AG04449 (cell line): ENCODE measurements at regions of chr2 and their contacts with region 1.

Region 1: GRCh38 chr2:44244129-44244871 is 31.0 kb upstream of the SLC3A1 start:
- DNase-seq: no peak
- H3K4me3 ChIP-seq: peak overlapping the region; percentile 33
- CTCF ChIP-seq: peak; percentile 33

Region 2: DNA sequence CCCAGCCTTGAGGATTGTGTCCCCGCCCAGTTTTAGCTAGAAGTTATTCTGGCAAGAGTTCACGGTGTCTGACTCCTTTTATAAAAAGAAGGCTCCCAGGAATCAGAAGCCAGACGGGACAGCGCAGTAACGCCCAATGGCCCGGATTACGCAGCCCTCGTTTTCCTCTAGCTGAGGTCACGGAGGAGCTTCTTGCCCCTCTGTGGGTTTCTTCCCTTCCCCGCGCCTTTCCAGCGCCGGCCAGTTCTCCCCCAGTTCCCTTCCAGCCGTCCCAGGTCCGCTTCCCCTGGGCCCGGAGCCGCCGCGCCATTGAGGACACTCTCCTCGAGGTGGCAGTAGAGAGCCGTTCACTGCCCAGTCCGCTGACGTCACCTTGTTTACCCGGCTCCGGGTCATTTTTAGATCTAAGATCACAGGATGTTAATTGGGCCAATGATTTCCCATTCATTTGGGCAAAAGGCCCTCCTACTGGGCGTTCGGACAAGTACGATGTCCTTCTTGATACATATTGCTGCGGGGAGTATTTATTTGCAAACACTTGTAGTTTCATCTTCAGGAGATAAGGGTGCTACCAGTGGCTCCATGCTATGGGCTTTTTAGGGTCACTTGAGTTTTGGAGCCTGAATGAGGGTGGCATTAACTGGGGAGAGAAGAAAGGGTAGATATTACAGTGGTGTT is 157.1 kb before region 1 on chr2:
- CTCF ChIA-PET with region 1: interaction called, 20 read pairs
- POLR2A ChIA-PET with region 1: no interaction called
- DNase-seq: no peak
- H3K4me3 ChIP-seq: peak overlapping the region; percentile 58
- CTCF ChIP-seq: peak; percentile 96

Region 3: GRCh38 chr2:44191739-44192138 is 52.6 kb before region 1 on chr2:
- CTCF ChIA-PET with region 1: no interaction called
- POLR2A ChIA-PET with region 1: no interaction called
- DNase-seq: no peak
- H3K4me3 ChIP-seq: no peak overlapping the region
- CTCF ChIP-seq: no peak

Region 4: GRCh38 chr2:44233450-44234128 is 10.7 kb before region 1 on chr2:
- CTCF ChIA-PET with region 1: interaction called, 11 read pairs
- POLR2A ChIA-PET with region 1: no interaction called
- DNase-seq: peak; percentile 24
- H3K4me3 ChIP-seq: no peak overlapping the region
- CTCF ChIP-seq: no peak

Region 5: DNA sequence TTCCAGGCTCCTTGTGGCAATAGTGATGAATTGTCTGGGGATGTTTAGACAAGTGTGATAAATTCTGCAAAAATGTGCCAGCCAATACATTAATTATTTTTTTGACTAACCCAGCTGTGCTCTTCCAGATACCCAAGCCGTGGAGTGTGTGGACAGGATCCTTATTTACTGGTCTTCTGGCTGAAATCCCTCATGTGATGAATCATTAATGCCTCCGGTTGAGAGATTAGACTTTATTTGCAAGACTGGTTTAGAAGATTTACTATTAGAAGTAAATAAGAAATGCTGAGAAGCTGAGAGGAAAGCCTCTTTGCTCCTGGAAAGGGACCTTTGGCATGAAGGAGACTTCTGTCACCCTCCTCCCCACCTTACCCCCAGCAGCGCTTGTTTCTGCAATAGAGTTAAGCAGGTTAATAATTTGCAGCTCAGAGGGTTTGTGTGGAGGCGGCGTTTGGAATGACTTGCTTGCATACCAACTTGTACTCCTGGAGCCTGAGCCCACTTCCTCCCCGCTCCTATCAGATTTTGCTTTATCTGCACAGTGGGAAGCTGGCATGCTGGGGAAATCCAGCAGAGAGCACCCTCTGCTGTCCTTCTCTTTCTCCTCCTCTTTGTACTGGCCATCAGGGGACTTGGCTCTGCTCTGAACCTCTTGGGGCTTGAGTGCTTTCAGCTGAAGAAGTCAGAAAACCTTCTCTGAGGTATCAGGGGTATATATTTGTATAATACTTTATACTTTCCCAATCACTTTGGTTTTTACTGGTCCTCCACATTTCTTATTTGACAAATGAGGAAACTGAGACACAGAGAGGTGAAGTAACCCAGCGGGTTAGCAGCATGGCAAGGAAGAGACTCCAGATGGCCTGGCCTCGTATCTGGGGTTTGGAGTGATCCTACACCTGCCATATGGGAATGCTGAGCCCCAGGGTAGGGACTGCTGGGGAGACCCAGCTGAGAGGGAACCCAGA is 47.3 kb after region 1 on chr2:
- CTCF ChIA-PET with region 1: interaction called, 25 read pairs
- POLR2A ChIA-PET with region 1: no interaction called
- DNase-seq: no peak
- H3K4me3 ChIP-seq: no peak overlapping the region; the same call in 1 of the 2 replicates
- CTCF ChIP-seq: peak; percentile 66

Region 6: DNA sequence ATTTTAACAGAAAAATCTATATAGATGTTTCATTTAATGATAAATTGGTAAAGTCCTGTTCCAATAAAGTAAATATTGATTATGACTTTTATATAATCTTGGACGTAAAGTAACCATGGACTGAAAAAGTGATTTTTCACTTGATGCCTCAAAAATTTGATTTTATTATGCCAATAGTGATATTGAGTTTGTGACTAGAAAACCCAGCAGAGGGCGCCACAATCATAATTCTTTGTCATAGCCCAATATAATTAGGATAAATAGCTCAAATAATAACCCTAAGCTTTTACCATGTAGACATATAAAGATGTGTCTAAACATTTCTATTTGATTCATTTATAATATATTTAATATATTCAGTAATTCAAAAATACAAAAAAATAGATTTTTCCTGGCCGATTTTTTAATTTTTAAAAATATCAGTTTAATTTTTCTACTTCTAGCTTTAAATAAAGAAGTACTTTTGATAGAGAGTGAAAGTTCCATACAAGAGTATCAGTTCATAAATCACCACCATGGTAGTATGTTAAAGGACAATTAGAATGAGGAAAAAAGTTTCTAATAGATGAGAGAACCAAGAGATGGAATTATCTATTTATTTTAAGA is 148.1 kb after region 1 on chr2:
- CTCF ChIA-PET with region 1: interaction called, 12 read pairs
- POLR2A ChIA-PET with region 1: no interaction called
- DNase-seq: no peak
- H3K4me3 ChIP-seq: no peak overlapping the region
- CTCF ChIP-seq: peak; percentile 44

Region 7: DNA sequence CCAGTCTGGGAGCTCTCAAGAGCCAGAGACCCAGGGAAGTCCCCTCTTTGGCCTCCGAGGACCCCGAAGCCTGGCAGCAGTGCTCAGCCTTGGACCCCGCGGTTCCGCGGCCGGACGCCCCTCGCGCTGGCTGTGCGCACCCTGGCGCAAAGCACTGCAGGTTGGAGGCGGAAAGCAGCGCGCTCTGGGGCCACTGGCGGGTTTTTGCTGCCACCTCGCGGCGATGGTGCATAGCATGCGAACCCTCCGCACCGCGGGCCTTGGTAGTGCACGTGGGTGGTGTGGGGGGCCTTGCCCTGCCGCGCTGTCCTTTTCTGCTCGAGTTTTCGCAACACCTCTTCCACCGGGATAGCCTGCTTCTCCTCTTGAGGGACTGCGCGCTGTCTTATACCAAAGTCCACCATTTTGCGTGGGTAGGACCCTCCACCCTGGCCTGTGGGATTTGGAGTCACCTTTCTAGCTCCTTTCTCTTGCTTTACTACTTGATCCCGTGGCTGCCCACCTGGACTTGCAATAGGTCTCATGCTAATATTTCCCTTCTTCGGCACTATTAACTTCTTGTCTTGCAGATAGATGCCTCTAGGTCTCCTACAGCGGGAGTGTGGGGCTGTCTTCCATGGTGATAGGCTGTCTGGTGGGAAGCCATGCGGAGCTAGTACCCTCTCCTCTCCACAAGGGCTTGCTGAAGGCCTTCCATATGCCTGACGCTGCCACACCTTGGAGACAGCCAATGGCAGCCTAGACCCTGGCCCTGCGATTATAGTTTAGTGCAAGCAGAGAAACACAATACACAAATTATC is 711.5 kb after region 1 on chr2:
- CTCF ChIA-PET with region 1: interaction called, 26 read pairs
- POLR2A ChIA-PET with region 1: no interaction called
- DNase-seq: no peak
- H3K4me3 ChIP-seq: no peak overlapping the region; the same call in 1 of the 2 replicates
- CTCF ChIP-seq: peak; percentile 93